ENCODE measurements at regions of chr9 and their contacts with region 1.

Region 1: GRCh38 chr9:124415102-124415851 is at the start of gene PSMB7:
- DNase-seq: peak; percentile 94 to 98 (median 98)
- ATAC-seq: peak; percentile 95
- H3K4me3 ChIP-seq: peak within 1 kb of the TSS; percentile 66 to 87
- H3K4me3 Mint-ChIP-seq: peak within 1 kb of the TSS; percentile 98
- H3K27ac ChIP-seq: peak within 1 kb of the TSS; percentile 61 to 74
- H3K27ac Mint-ChIP-seq: peak within 1 kb of the TSS; percentile 96
- H3K4me1 ChIP-seq: peaks cover 11% of the 10 kb centered on the region
- H3K4me1 Mint-ChIP-seq: peaks cover 39% of the 10 kb centered on the region
- H3K27me3 ChIP-seq: no peaks in the 10 kb centered on the region
- H3K27me3 Mint-ChIP-seq: no peaks in the 10 kb centered on the region
- CTCF ChIP-seq: peak; percentile 95
- total RNA-seq, gene PSMB7: 71.0 to 71.5 TPM

Region 2: DNA sequence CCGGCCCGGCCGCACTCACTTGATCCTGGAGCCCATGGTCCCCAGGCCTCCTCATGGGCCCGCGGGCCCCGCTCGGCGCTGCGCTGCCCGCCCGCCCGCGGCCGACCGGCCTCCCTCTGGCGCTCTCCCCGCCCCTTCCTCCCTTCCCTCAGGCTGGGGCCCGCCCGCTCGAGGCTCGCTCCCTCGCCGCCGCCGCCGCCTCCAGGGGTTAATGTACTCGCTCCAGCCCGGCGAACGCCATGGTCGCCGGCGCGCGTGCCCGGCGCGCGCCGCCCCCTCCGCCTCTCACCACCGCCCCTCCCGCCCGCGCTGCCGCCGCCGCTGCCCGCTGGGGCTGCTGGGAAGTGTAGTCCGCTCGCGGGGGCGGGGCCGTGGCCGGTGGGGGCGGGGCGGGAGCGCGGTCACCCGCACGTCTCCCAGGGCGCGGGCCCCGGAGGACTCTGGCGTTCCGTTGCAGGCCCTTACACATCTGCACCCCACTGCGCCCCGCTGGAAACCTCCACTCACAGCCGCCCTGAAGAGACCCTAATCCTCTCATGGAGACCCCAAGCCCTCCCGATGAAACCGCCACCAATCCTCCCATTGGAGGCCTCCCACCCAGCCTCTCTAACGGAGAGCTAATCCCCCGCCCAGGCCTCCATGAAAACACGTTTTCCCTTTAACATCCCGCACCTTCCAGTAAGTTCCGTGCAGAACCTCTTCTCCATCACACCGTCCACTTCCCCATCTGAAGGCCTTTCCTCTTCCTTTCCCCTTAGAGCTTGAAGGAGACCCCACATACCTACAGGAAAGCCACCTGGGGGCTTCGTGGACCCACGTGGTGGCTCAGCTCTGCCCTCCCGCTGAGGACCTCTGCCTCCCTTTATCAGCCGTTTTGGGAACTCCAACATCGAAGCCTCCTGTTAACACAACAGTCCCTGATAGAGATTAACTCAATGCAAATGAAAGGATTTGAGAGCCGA is 485.1 kb before region 1 on chr9 and contains the start of gene DENND1A:
- CTCF ChIA-PET with region 1: no interaction called
- POLR2A ChIA-PET with region 1: no interaction called
- intact Hi-C with region 1: loop called in 1 of 2 experiments (anchors 5 kb)
- DNase-seq: peak; percentile 74 to 92 (median 85)
- ATAC-seq: peak; percentile 94
- H3K4me3 ChIP-seq: peak within 1 kb of the TSS; percentile 58 to 66
- H3K4me3 Mint-ChIP-seq: peak within 1 kb of the TSS; percentile 90
- H3K27ac ChIP-seq: no peak within 1 kb of the TSS
- H3K27ac Mint-ChIP-seq: peak within 1 kb of the TSS; percentile 75
- H3K4me1 ChIP-seq: peaks cover 22% of the 10 kb centered on the region
- H3K4me1 Mint-ChIP-seq: peaks cover 42% of the 10 kb centered on the region
- H3K27me3 ChIP-seq: no peaks in the 10 kb centered on the region
- H3K27me3 Mint-ChIP-seq: no peaks in the 10 kb centered on the region
- CTCF ChIP-seq: no peak
- total RNA-seq, gene DENND1A: 17.5 to 18.7 TPM

Region 3: GRCh38 chr9:124658165-124659017 is 243.1 kb after region 1 on chr9:
- CTCF ChIA-PET with region 1: no interaction called
- POLR2A ChIA-PET with region 1: no interaction called
- intact Hi-C with region 1: loop called in 1 of 2 experiments (anchors 10 kb)
- DNase-seq: peak in 8 of 9 experiments; percentile 14 to 76 (median 40)
- ATAC-seq: peak; percentile 80
- H3K4me3 ChIP-seq: peak overlapping the region; percentile 55 to 60
- H3K4me3 Mint-ChIP-seq: peak overlapping the region; percentile 96
- H3K27ac ChIP-seq: peak overlapping the region; percentile 41 to 60
- H3K27ac Mint-ChIP-seq: peak overlapping the region; percentile 92
- H3K4me1 ChIP-seq: peaks cover 16% of the 10 kb centered on the region
- H3K4me1 Mint-ChIP-seq: peaks cover 30% of the 10 kb centered on the region
- H3K27me3 ChIP-seq: no peaks in the 10 kb centered on the region
- H3K27me3 Mint-ChIP-seq: peaks cover 3% of the 10 kb centered on the region
- CTCF ChIP-seq: no peak

Region 4: GRCh38 chr9:124716808-124717207 is 301.5 kb after region 1 on chr9:
- CTCF ChIA-PET with region 1: no interaction called
- POLR2A ChIA-PET with region 1: no interaction called
- intact Hi-C with region 1: loop called (anchors 5 to 10 kb)
- DNase-seq: no peak
- ATAC-seq: no peak
- H3K4me3 ChIP-seq: no peak overlapping the region
- H3K4me3 Mint-ChIP-seq: no peak overlapping the region
- H3K27ac ChIP-seq: no peak overlapping the region
- H3K27ac Mint-ChIP-seq: no peak overlapping the region
- H3K4me1 ChIP-seq: no peaks in the 10 kb centered on the region
- H3K4me1 Mint-ChIP-seq: no peaks in the 10 kb centered on the region
- H3K27me3 ChIP-seq: no peaks in the 10 kb centered on the region
- H3K27me3 Mint-ChIP-seq: peaks cover 11% of the 10 kb centered on the region
- CTCF ChIP-seq: no peak

Region 5: GRCh38 chr9:125126019-125126746 is 710.9 kb after region 1 on chr9:
- CTCF ChIA-PET with region 1: no interaction called
- POLR2A ChIA-PET with region 1: no interaction called
- intact Hi-C with region 1: loop called in 1 of 2 experiments (anchors 10 kb)
- DNase-seq: peak; percentile 65 to 95 (median 82)
- ATAC-seq: peak; percentile 99
- H3K4me3 ChIP-seq: no peak overlapping the region
- H3K4me3 Mint-ChIP-seq: peak overlapping the region; percentile 61
- H3K27ac ChIP-seq: peak overlapping the region in 1 of 2 experiments; percentile 42
- H3K27ac Mint-ChIP-seq: peak overlapping the region; percentile 91
- H3K4me1 ChIP-seq: peaks cover 23% of the 10 kb centered on the region
- H3K4me1 Mint-ChIP-seq: peaks cover 36% of the 10 kb centered on the region
- H3K27me3 ChIP-seq: no peaks in the 10 kb centered on the region
- H3K27me3 Mint-ChIP-seq: no peaks in the 10 kb centered on the region
- CTCF ChIP-seq: no peak

Region 6: GRCh38 chr9:125700791-125701190 is 1285.5 kb after region 1 on chr9:
- CTCF ChIA-PET with region 1: no interaction called
- POLR2A ChIA-PET with region 1: no interaction called
- intact Hi-C with region 1: loop called in 1 of 2 experiments (anchors 5 kb)
- DNase-seq: peak in 1 of 9 experiments; percentile 20
- ATAC-seq: no peak
- H3K4me3 ChIP-seq: no peak overlapping the region
- H3K4me3 Mint-ChIP-seq: no peak overlapping the region
- H3K27ac ChIP-seq: no peak overlapping the region
- H3K27ac Mint-ChIP-seq: no peak overlapping the region
- H3K4me1 ChIP-seq: peaks cover 3% of the 10 kb centered on the region
- H3K4me1 Mint-ChIP-seq: peaks cover 54% of the 10 kb centered on the region
- H3K27me3 ChIP-seq: no peaks in the 10 kb centered on the region
- H3K27me3 Mint-ChIP-seq: no peaks in the 10 kb centered on the region
- CTCF ChIP-seq: no peak

Measured in CD8-positive, alpha-beta T cell (primary cell).